CD8-positive, alpha-beta T cell (primary cell): ENCODE measurements at regions of chr6 and their contacts with region 1.

Region 1: DNA sequence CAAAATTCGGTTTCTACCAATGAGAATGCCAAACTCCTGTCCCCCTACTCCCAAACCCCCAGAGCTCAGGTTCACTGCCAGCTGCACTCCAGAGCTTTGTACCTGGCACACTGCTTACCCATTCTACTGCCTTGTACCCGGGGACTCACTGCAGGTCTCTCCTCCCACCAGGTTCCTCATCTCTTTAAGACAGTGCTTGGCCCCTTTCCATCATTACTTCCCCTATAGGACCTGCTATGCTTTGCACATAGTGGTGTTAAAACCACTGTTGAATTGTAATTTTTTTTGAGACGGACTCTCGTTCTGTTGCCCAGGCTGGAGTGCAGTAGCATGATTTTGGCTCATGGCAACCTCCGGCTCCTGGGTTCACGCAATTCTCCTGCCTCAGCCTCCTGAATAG is 25.9 kb downstream of the LYRM4 start:
- DNase-seq: no peak
- ATAC-seq: no peak
- H3K4me3 ChIP-seq: no peak overlapping the region
- H3K4me3 Mint-ChIP-seq: no peak overlapping the region
- H3K27ac ChIP-seq: no peak overlapping the region
- H3K27ac Mint-ChIP-seq: no peak overlapping the region
- H3K4me1 ChIP-seq: no peaks in the 10 kb centered on the region
- H3K4me1 Mint-ChIP-seq: no peaks in the 10 kb centered on the region
- H3K27me3 ChIP-seq: no peaks in the 10 kb centered on the region
- H3K27me3 Mint-ChIP-seq: no peaks in the 10 kb centered on the region
- CTCF ChIP-seq: no peak

Region 2: GRCh38 chr6:5204376-5204775 is 30.5 kb before region 1 on chr6:
- CTCF ChIA-PET with region 1: no interaction called
- POLR2A ChIA-PET with region 1: no interaction called
- intact Hi-C with region 1: loop called in 1 of 2 experiments (anchors 1 kb)
- DNase-seq: no peak
- ATAC-seq: no peak
- H3K4me3 ChIP-seq: no peak overlapping the region
- H3K4me3 Mint-ChIP-seq: no peak overlapping the region
- H3K27ac ChIP-seq: no peak overlapping the region
- H3K27ac Mint-ChIP-seq: no peak overlapping the region
- H3K4me1 ChIP-seq: no peaks in the 10 kb centered on the region
- H3K4me1 Mint-ChIP-seq: no peaks in the 10 kb centered on the region
- H3K27me3 ChIP-seq: no peaks in the 10 kb centered on the region
- H3K27me3 Mint-ChIP-seq: no peaks in the 10 kb centered on the region
- CTCF ChIP-seq: no peak

Region 3: GRCh38 chr6:5260661-5261544 is 26.0 kb after region 1 on chr6 and contains the starts of genes FARS2 and LYRM4:
- CTCF ChIA-PET with region 1: no interaction called
- POLR2A ChIA-PET with region 1: no interaction called
- intact Hi-C with region 1: no loop called
- DNase-seq: peak; percentile 86 to 98 (median 92)
- ATAC-seq: peak; percentile 82
- H3K4me3 ChIP-seq: peak within 1 kb of the TSS; percentile 93
- H3K4me3 Mint-ChIP-seq: peak within 1 kb of the TSS; percentile 98
- H3K27ac ChIP-seq: peak within 1 kb of the TSS; percentile 97 to 99
- H3K27ac Mint-ChIP-seq: peak within 1 kb of the TSS; percentile 100
- H3K4me1 ChIP-seq: peaks cover 17% of the 10 kb centered on the region
- H3K4me1 Mint-ChIP-seq: peaks cover 37% of the 10 kb centered on the region
- H3K27me3 ChIP-seq: no peaks in the 10 kb centered on the region
- H3K27me3 Mint-ChIP-seq: no peaks in the 10 kb centered on the region
- CTCF ChIP-seq: no peak
- total RNA-seq, gene FARS2: 9.1 to 10.5 TPM
- total RNA-seq, gene LYRM4: 23.4 to 24.3 TPM